ENCODE measurements at regions of chr22 and their contacts with region 1.

Region 1: DNA sequence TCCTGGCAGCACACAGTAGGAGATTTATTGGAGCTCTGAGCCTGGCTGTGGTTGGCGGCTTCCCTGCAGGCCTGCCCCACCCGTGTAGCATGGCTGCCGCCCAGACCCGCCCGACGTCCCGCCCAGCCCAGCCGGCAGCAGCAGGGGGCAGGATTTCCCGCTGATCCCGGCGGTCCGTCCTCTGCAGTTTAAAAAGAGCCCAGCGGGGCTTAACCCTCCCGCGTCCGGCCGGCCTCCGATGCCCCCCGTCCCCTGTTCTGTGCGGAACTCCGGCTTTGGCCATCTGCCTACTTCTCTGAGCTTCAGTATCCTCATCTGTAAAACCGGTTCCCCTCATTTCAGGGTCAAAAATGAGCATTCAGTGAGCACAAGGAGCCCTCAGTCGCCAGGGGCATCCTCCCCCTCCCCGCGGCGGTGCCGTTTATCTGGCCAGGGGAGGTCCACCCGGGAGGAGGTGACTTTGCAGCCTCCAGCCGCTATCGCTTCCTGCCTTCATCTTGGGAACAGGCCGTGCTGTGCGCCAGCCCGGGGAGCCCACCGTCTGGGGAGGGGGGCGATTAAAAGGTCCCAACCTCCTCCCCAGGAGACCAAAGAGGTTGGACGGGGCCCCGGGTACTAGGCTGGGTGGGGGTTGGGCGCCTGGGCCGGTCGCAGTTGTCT is at the start of gene GAS2L1:
- DNase-seq: peak; percentile 52 to 61 (median 60)
- H3K4me3 ChIP-seq: peak within 1 kb of the TSS; percentile 42 to 94 (median 90)
- H3K4me3 Mint-ChIP-seq: peak within 1 kb of the TSS; percentile 85 to 92
- H3K27ac ChIP-seq: peak within 1 kb of the TSS in 1 of 2 donors; percentile 73
- H3K27ac Mint-ChIP-seq: peak within 1 kb of the TSS; percentile 50 to 89 (median 84)
- H3K4me1 ChIP-seq: peaks cover 46 to 78% of the 10 kb centered on the region in 2 donors
- H3K4me1 Mint-ChIP-seq: peaks cover 59% of the 10 kb centered on the region
- H3K27me3 ChIP-seq: peaks cover 0 to 32% of the 10 kb centered on the region in 2 donors
- H3K27me3 Mint-ChIP-seq: peaks cover 22 to 41% (median 33%) of the 10 kb centered on the region in 3 donors
- CTCF ChIP-seq: peak; percentile 61
- polyA plus RNA-seq, gene GAS2L1: 14.9 to 20.0 (median 15.7) TPM

Region 2: DNA sequence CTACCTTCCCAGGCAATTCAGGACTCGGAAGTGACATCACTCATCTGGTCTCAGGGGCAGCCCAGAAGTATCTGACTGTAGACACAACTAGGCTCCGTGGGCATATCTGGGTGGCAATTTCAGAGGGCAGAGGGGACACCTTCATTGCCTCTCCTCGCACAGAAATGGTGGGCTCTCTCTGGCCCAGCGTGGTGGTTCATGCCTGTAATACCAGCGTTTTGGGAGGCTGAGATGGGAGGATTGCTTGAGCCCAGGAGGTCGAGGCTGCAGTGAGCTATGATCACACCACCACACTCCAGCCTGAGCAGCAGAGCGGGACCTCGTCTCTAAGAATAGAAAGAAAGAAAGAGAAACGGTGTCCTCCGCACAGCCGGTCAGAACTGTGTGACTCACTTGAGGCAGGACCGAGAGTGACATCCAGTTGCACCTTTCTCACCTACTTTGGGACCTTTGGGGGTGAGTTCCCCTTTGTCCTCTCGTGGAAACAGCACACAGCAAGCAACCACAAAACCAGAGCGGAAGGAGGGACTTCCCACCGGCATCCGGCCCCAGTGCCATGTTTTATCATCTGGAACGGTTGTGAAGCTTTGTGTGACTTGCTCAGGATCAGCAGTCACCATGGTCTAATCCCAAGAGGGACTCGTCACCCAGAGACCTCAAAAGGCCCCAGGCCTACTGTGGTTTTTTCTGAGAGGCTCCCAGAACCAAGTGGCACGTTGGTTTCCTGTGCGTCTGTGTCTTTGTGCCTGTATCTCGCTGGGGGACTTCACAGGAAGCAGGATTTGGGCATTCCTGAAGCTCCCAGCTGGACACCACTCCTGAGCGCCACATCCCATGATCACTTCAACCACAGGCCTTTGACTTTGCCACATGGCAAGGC is 139.0 kb before region 1 on chr22:
- intact Hi-C with region 1: no loop called
- DNase-seq: peak; percentile 14 to 88 (median 45)
- H3K4me3 ChIP-seq: peak overlapping the region in 1 of 3 experiments; percentile 45
- H3K4me3 Mint-ChIP-seq: peak overlapping the region; percentile 73 to 84
- H3K27ac ChIP-seq: no peak overlapping the region
- H3K27ac Mint-ChIP-seq: peak overlapping the region in 4 of 7 donors; percentile 37 to 87 (median 66)
- H3K4me1 ChIP-seq: peaks cover 10 to 11% of the 10 kb centered on the region in 2 donors
- H3K4me1 Mint-ChIP-seq: peaks cover 15% of the 10 kb centered on the region
- H3K27me3 ChIP-seq: peaks cover 0 to 6% of the 10 kb centered on the region in 2 donors
- H3K27me3 Mint-ChIP-seq: peaks cover 22 to 38% (median 33%) of the 10 kb centered on the region in 3 donors
- CTCF ChIP-seq: no peak

Region 3: GRCh38 chr22:29267858-29268417 is 38.4 kb before region 1 on chr22 and contains the starts of genes EWSR1 and RHBDD3:
- intact Hi-C with region 1: loop called (anchors 5 kb)
- DNase-seq: peak; percentile 97 to 98 (median 98)
- H3K4me3 ChIP-seq: peak within 1 kb of the TSS; percentile 68 to 86 (median 80)
- H3K4me3 Mint-ChIP-seq: peak within 1 kb of the TSS; percentile 93 to 98
- H3K27ac ChIP-seq: peak within 1 kb of the TSS; percentile 86 to 100
- H3K27ac Mint-ChIP-seq: peak within 1 kb of the TSS; percentile 97 to 100 (median 100)
- H3K4me1 ChIP-seq: peaks cover 33 to 41% of the 10 kb centered on the region in 2 donors
- H3K4me1 Mint-ChIP-seq: peaks cover 46% of the 10 kb centered on the region
- H3K27me3 ChIP-seq: no peaks in the 10 kb centered on the region
- H3K27me3 Mint-ChIP-seq: peaks cover 0 to 2% (median 0%) of the 10 kb centered on the region in 3 donors
- CTCF ChIP-seq: no peak
- polyA plus RNA-seq, gene EWSR1: 81.2 to 280 (median 136) TPM
- polyA plus RNA-seq, gene RHBDD3: 4.0 to 11.1 (median 4.8) TPM